PC-3 (cell line): ENCODE measurements at regions of chr7 and their contacts with region 1.

Region 1: GRCh38 chr7:89238156-89238555 is 442.6 kb upstream of the TEX47 start:
- DNase-seq: peak; percentile 67
- ATAC-seq: peak; percentile 89
- H3K4me3 ChIP-seq: no peak overlapping the region
- H3K27ac ChIP-seq: peak overlapping the region; percentile 56
- H3K4me1 ChIP-seq: peaks cover 17% of the 10 kb centered on the region
- H3K27me3 ChIP-seq: no peaks in the 10 kb centered on the region
- CTCF ChIP-seq: no peak

Region 2: GRCh38 chr7:89029864-89030263 is 208.3 kb before region 1 on chr7:
- CTCF ChIA-PET with region 1: no interaction called
- POLR2A ChIA-PET with region 1: no interaction called
- intact Hi-C with region 1: loop called (anchors 5 kb)
- DNase-seq: peak; percentile 45
- ATAC-seq: peak; percentile 55
- H3K4me3 ChIP-seq: no peak overlapping the region
- H3K27ac ChIP-seq: no peak overlapping the region
- H3K4me1 ChIP-seq: peaks cover 26% of the 10 kb centered on the region
- H3K27me3 ChIP-seq: no peaks in the 10 kb centered on the region
- CTCF ChIP-seq: no peak

Region 3: GRCh38 chr7:89091550-89091949 is 146.6 kb before region 1 on chr7:
- CTCF ChIA-PET with region 1: no interaction called
- POLR2A ChIA-PET with region 1: no interaction called
- intact Hi-C with region 1: loop called (anchors 5 kb)
- DNase-seq: no peak
- ATAC-seq: no peak
- H3K4me3 ChIP-seq: no peak overlapping the region
- H3K27ac ChIP-seq: no peak overlapping the region
- H3K4me1 ChIP-seq: peaks cover 16% of the 10 kb centered on the region
- H3K27me3 ChIP-seq: no peaks in the 10 kb centered on the region
- CTCF ChIP-seq: no peak

Region 4: GRCh38 chr7:89123915-89124314 is 114.2 kb before region 1 on chr7:
- CTCF ChIA-PET with region 1: no interaction called
- POLR2A ChIA-PET with region 1: no interaction called
- intact Hi-C with region 1: no loop called
- DNase-seq: no peak
- ATAC-seq: no peak
- H3K4me3 ChIP-seq: no peak overlapping the region
- H3K27ac ChIP-seq: no peak overlapping the region
- H3K4me1 ChIP-seq: no peaks in the 10 kb centered on the region
- H3K27me3 ChIP-seq: no peaks in the 10 kb centered on the region
- CTCF ChIP-seq: no peak

Region 5: DNA sequence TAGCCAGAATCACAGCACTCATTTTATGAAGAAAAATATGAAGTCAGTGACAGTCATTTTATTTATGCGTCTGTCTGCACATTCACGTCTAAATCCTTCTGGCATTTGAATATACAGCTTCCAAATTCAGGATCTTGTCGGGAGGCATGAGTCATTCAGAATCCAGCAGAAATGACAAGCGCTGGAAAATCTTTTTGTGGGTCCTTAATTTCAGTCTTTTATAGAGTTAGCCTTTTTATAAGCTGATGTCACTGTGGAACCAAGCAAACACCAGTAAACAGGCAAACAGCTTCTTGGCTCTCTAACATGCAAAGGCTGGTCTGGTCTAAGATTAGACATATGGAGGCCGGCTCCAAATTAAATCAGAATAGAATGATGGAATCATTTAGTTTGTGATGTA is 54.4 kb before region 1 on chr7:
- CTCF ChIA-PET with region 1: no interaction called
- POLR2A ChIA-PET with region 1: no interaction called
- intact Hi-C with region 1: loop called (anchors 2 kb)
- DNase-seq: peak; percentile 6
- ATAC-seq: peak; percentile 73
- H3K4me3 ChIP-seq: no peak overlapping the region
- H3K27ac ChIP-seq: no peak overlapping the region
- H3K4me1 ChIP-seq: no peaks in the 10 kb centered on the region
- H3K27me3 ChIP-seq: peaks cover 9% of the 10 kb centered on the region; the same call in 1 of the 2 replicates
- CTCF ChIP-seq: no peak

Region 6: DNA sequence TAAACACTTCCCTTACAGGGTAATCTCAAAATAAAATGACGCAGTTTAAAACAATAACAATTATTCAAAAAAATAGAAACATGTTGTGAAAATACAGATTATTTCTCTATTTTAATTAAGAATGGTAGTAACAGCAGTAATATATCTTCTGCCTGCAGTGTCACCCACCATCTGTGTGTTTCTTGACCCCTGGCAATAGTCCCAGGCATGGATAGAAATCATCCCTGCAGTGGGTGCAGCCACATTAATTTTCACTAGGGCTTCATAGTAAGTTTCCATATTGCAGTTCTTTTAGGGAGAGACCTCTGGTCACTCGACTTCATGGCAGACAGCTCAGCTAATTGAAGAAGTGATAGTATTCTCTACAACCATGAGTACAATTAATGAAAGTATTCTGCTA is 27.5 kb after region 1 on chr7:
- CTCF ChIA-PET with region 1: no interaction called
- POLR2A ChIA-PET with region 1: no interaction called
- intact Hi-C with region 1: no loop called
- DNase-seq: no peak
- ATAC-seq: no peak
- H3K4me3 ChIP-seq: no peak overlapping the region
- H3K27ac ChIP-seq: no peak overlapping the region
- H3K4me1 ChIP-seq: no peaks in the 10 kb centered on the region
- H3K27me3 ChIP-seq: no peaks in the 10 kb centered on the region
- CTCF ChIP-seq: no peak

Region 7: DNA sequence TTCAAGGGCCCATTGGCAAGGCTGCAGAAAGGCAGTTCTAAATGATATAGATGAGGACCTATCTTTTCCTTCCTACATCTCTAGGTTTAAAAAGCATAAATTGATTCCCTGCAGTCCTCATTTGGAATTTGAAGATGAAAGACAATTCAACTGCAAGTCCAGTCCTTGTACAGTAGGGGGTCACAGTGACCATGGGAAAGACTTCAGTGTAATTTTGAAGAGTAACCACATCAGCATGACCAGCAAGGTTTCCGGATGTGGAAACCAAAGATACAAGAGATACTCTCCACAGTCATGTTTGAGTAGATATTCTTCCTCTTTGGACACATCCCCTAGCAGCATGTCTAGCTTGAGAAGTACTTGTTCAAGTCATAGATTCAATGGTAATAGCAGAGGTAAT is 96.6 kb after region 1 on chr7:
- CTCF ChIA-PET with region 1: no interaction called
- POLR2A ChIA-PET with region 1: no interaction called
- intact Hi-C with region 1: loop called (anchors 5 kb)
- DNase-seq: peak; percentile 3
- ATAC-seq: no peak
- H3K4me3 ChIP-seq: no peak overlapping the region
- H3K27ac ChIP-seq: no peak overlapping the region
- H3K4me1 ChIP-seq: no peaks in the 10 kb centered on the region
- H3K27me3 ChIP-seq: no peaks in the 10 kb centered on the region
- CTCF ChIP-seq: no peak

Region 8: GRCh38 chr7:89771003-89771636 is 533.0 kb after region 1 on chr7:
- CTCF ChIA-PET with region 1: no interaction called
- POLR2A ChIA-PET with region 1: no interaction called
- intact Hi-C with region 1: loop called (anchors 5 kb)
- DNase-seq: peak; percentile 25
- ATAC-seq: peak; percentile 85
- H3K4me3 ChIP-seq: no peak overlapping the region
- H3K27ac ChIP-seq: no peak overlapping the region
- H3K4me1 ChIP-seq: peaks cover 14% of the 10 kb centered on the region; the same call in 1 of the 2 replicates
- H3K27me3 ChIP-seq: no peaks in the 10 kb centered on the region
- CTCF ChIP-seq: peak; percentile 48; the same call in 1 of the 2 replicates